Naive thymus-derived CD4-positive, alpha-beta T cell (primary cell): ENCODE measurements at regions of chr11 and their contacts with region 1.

Region 1: DNA sequence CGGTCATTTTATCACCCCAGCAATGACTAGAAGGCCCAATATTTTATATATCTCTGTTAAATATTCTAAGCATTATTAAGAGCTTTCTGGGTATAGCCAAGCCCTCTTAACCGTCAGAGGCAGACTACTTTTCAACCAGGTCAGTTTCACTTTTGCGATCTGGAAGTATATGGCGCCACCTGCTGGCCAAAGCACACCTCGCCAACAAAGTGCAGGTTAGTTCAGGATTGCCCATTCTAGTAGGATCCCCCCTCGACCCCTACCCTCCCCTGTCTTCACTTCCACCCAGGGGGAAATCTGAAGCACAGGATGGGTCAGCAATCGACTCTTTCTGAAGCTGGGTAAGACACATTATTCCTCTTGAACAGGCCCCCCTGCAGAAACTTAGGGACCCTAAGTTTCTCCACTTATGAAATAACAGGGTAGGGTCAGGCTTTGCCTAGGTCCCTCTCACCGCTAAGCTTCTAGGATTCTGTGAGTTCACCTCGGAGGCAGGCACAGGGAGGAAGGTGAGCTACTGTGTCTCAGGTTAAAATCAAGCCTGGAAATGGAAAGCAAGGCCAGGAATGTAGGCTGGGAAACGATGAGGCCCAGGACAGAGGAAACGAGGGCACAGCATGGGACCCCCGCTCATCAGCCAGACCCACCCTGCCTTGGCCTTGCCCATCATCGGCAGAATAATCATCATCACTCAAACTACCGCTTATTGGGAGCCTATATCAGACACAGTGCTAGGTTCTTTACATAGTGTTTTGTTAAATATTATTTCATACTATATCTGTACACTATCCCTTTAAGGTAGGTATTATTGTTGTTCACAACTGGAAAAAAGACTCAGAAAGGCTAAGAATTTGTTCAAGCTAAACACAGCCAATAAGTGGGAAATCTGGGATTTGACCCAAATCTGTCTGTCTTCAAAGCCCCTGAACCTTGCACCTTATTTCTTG is 35.6 kb downstream of the KCNJ1 start:
- DNase-seq: peak; percentile 68 to 85 (median 80)
- ATAC-seq: peak; percentile 90
- H3K4me3 ChIP-seq: peak overlapping the region; percentile 43
- H3K4me3 Mint-ChIP-seq: peak overlapping the region; percentile 61 to 87 (median 76)
- H3K27ac ChIP-seq: peak overlapping the region; percentile 67
- H3K27ac Mint-ChIP-seq: peak overlapping the region; percentile 58 to 98 (median 89)
- H3K4me1 ChIP-seq: peaks cover 11 to 15% of the 10 kb centered on the region in 2 donors
- H3K4me1 Mint-ChIP-seq: peaks cover 15 to 35% (median 24%) of the 10 kb centered on the region in 7 donors
- H3K27me3 ChIP-seq: no peaks in the 10 kb centered on the region
- H3K27me3 Mint-ChIP-seq: peaks cover 0 to 4% (median 0%) of the 10 kb centered on the region in 5 donors

Region 2: DNA sequence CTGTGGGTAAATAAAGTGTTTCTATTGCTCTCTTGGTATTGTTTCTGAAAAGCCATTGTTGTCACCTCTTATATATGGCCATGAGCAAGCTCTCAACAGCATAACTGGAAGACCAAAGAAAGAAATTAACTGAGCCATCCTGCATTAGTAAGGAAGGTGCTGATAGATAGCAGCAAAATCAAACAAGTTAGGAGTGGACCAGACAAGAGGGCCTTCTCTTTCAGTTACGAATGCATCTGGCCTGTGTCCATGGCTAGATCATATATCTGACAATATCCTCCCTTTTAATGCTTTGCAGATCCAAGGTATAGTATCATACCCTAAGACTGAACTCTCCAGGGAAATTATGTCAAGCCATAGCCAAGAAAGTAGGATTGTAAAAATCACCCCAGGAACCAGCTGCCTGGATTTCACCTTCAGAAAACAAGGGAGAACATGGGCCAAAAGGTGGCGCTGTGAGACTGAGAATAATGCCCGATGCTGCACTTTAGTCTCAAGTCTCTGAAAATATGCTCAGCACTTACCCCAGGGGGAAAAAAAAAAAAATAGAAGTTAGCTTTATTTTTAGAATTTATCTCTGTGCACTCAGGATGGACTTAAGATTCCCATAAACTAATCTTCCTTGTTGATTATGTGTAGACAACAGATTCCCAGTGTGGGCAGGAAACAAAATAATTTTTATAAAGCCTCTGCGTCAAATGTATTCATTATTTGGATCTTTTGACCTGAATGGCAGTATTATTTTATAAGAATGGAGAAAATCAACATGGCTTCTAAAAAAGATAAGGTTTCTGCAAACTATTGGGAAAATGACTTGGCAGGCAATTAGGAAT is 659.2 kb before region 1 on chr11:
- CTCF ChIA-PET with region 1: interaction called, 50 read pairs
- POLR2A ChIA-PET with region 1: interaction called, 4 read pairs
- intact Hi-C with region 1: loop called (anchors 1 kb)
- DNase-seq: peak; percentile 59 to 82 (median 75)
- ATAC-seq: peak; percentile 85
- H3K4me3 ChIP-seq: no peak overlapping the region
- H3K4me3 Mint-ChIP-seq: no peak overlapping the region
- H3K27ac ChIP-seq: no peak overlapping the region
- H3K27ac Mint-ChIP-seq: peak overlapping the region in 2 of 9 donors; percentile 27 to 70
- H3K4me1 ChIP-seq: no peaks in the 10 kb centered on the region
- H3K4me1 Mint-ChIP-seq: peaks cover 0 to 9% (median 4%) of the 10 kb centered on the region in 7 donors
- H3K27me3 ChIP-seq: no peaks in the 10 kb centered on the region
- H3K27me3 Mint-ChIP-seq: peaks cover 0 to 15% (median 0%) of the 10 kb centered on the region in 5 donors

Region 3: DNA sequence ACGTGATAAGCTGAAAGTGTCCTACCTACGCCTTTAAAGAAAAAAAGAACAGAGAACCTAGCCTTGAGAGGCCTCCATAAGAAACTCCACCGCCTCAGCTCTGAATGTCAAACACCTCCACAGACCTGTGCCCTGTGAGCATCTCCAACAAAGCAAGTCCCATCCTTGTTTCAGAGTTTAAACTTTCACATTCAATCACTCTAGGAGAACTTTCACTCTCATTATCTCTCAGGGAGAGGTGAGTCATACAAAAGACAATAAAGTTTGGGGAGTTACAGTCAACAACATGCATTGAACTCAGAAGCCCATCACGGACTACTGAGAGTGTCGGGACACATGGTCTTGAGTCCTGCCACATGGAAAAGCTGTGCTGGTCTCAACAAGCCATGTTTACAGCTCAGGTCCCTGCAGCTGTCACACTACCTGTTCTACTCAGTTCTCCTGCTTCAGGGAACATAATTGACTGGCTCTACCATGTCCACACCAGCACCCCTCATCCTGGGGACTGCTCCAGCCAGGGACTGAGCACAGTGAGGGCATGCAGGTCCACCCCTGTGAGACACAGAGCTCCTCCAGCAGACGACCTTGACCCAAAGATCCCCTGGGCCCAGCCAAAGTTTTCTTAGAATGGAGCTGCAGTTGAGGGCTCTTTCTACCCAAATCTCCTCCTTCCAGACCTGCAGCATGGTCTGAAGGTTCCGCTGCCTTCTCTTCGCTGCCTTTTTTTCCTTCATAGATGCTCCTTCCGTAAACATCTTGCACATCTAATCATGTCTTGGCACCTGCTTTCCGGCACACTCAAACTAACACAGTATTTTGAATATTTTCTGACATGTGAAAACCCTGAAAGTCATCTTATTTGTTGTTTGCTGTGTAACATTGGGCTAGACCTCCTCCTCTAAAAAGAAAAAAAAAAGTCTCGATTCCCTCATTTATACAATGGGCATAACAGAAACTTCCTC is 359.0 kb before region 1 on chr11:
- CTCF ChIA-PET with region 1: no interaction called
- POLR2A ChIA-PET with region 1: no interaction called
- intact Hi-C with region 1: loop called in 1 of 2 experiments (anchors 2 kb)
- DNase-seq: peak in 5 of 9 donors; percentile 38 to 77 (median 57)
- ATAC-seq: peak; percentile 17
- H3K4me3 ChIP-seq: peak overlapping the region; percentile 63
- H3K4me3 Mint-ChIP-seq: peak overlapping the region; percentile 73 to 99 (median 82)
- H3K27ac ChIP-seq: peak overlapping the region; percentile 97
- H3K27ac Mint-ChIP-seq: peak overlapping the region; percentile 92 to 100 (median 98)
- H3K4me1 ChIP-seq: peaks cover 98 to 100% of the 10 kb centered on the region in 2 donors
- H3K4me1 Mint-ChIP-seq: peaks cover 76 to 100% (median 98%) of the 10 kb centered on the region in 7 donors
- H3K27me3 ChIP-seq: no peaks in the 10 kb centered on the region
- H3K27me3 Mint-ChIP-seq: no peaks in the 10 kb centered on the region

Region 4: DNA sequence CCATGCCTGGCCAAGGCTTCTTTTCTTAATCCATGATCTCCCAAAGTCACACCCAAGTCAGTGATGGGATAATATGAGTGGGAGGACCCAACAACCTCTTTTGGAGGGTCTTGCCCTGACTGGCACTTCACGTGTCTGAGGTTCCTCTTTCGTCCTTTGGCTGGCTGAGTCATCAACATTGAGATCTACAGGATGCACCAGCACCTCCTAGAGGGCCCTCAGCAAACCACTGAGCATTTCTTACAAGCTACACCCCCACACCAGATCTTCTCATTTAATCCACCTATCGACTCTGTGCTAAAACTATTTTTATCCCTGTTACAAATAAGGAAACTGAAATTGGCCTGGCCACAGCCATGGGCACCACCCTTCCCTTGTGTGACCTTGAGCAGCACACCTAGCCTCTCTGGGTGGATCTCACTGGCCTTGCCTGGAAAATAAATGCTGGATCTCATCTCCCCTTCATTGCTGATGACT is 74.2 kb before region 1 on chr11:
- CTCF ChIA-PET with region 1: interaction called, 3 read pairs
- POLR2A ChIA-PET with region 1: interaction called, 3 read pairs
- intact Hi-C with region 1: loop called (anchors 1 to 2 kb)
- DNase-seq: peak; percentile 27 to 74 (median 61)
- ATAC-seq: peak; percentile 96
- H3K4me3 ChIP-seq: no peak overlapping the region
- H3K4me3 Mint-ChIP-seq: peak overlapping the region in 8 of 10 donors; percentile 9 to 62 (median 40)
- H3K27ac ChIP-seq: no peak overlapping the region
- H3K27ac Mint-ChIP-seq: peak overlapping the region; percentile 43 to 92 (median 84)
- H3K4me1 ChIP-seq: peaks cover 36 to 49% of the 10 kb centered on the region in 2 donors
- H3K4me1 Mint-ChIP-seq: peaks cover 70 to 96% (median 89%) of the 10 kb centered on the region in 7 donors
- H3K27me3 ChIP-seq: no peaks in the 10 kb centered on the region
- H3K27me3 Mint-ChIP-seq: no peaks in the 10 kb centered on the region

Region 5: DNA sequence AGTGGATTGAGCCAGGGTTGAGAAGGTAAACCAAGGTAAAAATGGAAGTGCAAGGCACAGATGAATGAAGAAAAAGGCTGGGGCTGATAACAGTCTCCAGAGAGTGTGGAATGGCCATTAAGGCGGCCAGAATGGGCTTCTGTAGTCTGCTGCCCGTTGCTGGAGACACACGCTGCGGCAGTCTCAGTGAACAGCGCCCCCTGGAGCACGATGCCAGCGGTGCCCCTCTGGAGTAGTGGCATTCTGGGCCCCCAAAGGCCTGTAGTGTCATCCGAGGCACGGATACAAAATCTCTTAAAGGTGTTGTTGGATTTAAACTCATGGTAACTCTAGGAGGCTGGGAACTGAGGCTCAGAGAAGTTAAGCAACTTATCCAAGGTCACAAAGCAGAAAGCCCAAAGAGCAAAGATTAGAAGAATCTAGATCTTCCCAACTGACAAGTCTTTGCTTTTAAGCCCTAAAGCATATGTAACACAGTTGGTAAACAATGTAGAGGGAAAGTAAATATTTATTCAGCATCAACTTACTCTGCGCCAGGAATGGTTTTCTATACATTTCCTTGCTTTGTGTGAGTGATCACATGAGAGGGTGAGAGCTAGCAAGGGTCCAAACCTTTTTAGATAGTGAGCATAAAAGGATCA is 17.5 kb after region 1 on chr11:
- CTCF ChIA-PET with region 1: interaction called, 37 read pairs
- POLR2A ChIA-PET with region 1: interaction called, 5 read pairs
- intact Hi-C with region 1: no loop called
- DNase-seq: peak in 6 of 9 donors; percentile 30 to 61 (median 56)
- ATAC-seq: peak; percentile 83
- H3K4me3 ChIP-seq: no peak overlapping the region
- H3K4me3 Mint-ChIP-seq: no peak overlapping the region
- H3K27ac ChIP-seq: no peak overlapping the region
- H3K27ac Mint-ChIP-seq: peak overlapping the region in 3 of 9 donors; percentile 18 to 82 (median 54)
- H3K4me1 ChIP-seq: peaks cover 15 to 21% of the 10 kb centered on the region in 2 donors
- H3K4me1 Mint-ChIP-seq: peaks cover 22 to 39% (median 30%) of the 10 kb centered on the region in 7 donors
- H3K27me3 ChIP-seq: no peaks in the 10 kb centered on the region
- H3K27me3 Mint-ChIP-seq: peaks cover 0 to 2% (median 0%) of the 10 kb centered on the region in 5 donors